ENCODE measurements at regions of chr13 and their contacts with region 1.

Region 1: DNA sequence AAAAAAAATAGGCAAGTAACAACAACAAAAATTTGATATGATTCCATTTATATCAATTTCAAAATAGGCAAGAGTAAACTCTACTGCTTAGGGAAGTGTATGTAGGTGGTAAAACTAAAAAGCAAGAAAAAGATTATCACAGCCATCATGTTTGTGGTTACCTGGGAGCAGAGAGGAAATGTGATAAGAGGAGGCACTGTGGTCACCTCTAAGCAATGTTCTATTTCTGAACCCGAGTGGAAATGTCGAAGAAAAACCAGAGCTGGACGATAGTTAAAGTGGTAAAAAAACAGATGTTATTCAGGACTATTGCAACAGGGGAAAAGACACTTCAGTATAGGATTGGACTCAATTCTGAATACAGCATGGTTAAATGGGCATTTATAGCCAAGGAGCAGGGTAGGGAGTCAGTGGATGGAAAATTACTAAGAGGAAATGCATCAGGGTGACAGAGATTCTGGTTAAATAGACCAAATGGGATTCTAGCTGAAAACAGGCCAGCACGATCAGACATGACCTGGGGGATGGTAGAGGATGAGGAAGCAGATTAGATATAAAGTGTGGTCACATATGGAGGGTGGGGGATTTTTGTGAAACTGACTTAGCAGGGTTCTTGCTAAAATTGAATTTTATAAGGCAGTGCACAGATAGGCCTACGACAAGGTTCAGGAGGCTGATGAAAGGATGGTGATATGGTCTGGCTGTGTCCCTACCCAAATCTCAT is 6.0 kb upstream of the TEX30 start:
- DNase-seq: peak; percentile 47
- H3K4me3 Mint-ChIP-seq: peak overlapping the region; percentile 14
- H3K27ac Mint-ChIP-seq: peak overlapping the region; percentile 90
- H3K4me1 Mint-ChIP-seq: peaks cover 28% of the 10 kb centered on the region
- H3K27me3 Mint-ChIP-seq: no peaks in the 10 kb centered on the region

Region 2: DNA sequence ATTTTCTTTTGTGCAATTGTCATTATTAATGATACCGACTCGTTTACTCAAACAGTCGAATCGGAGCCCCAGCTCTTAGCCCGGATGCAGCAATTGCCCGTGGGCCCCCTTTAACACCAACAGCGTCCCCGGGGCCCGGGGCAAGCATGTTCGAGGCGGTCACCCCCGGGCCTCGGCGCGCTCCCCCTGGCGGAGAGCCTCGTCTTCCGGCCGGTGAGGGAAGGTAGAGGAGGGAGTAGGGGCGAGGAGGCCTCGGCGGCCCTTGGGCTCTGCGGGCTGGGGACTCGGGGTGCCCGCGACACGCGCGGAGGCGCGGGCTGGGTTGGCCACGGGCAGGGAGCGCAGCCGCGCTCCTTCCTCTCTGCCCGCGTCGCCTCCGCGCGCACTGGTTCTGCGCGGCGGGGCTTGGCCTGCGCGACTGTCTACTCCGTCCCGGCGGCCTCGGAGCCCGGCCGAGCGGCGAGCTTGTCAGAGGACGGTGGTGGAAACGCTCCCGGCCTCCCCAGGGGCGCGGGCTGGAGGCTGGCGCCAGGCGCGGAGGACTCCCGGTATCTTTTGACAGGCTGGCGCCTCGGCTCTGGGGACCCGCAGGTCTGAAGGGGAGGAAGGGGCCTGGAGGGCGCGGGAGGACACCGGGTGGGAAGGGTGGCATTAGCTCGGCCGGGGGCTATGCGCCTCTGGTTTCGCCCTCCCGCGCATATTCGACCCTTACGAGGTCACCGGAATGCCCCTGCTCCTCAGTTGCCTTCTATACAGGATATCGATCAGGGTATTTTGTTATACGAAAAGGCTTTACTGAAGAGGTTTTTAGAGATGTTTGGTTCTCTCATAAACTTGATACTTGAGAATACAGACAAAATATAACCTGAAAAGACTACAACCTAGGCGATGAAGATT is 20.8 kb after region 1 on chr13:
- CTCF ChIA-PET with region 1: interaction called, 20 read pairs
- POLR2A ChIA-PET with region 1: interaction called, 3 read pairs
- intact Hi-C with region 1: loop called (anchors 1 kb)
- DNase-seq: peak; percentile 88
- H3K4me3 Mint-ChIP-seq: peak overlapping the region; percentile 90
- H3K27ac Mint-ChIP-seq: peak overlapping the region; percentile 38
- H3K4me1 Mint-ChIP-seq: peaks cover 22% of the 10 kb centered on the region
- H3K27me3 Mint-ChIP-seq: peaks cover 5% of the 10 kb centered on the region

Region 3: DNA sequence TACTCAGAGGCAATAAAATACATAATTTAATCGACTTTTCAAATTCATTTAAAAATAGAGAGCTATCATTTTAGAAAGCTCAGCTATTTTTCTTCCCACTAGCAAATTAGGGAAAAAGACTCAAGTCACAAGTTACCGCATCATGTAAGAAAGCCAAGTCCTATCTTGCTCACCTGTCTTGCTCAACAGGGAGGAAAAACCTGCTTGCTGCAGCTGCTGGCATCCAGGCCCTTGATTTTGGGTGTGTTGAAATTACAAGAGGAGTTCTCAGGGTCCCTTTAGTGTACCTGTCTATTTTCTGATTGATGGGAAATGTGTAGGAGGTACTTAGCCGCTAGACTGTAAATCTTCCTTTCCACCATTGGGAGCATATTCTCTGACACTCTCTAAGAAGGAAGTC is 264.5 kb after region 1 on chr13:
- CTCF ChIA-PET with region 1: no interaction called
- POLR2A ChIA-PET with region 1: no interaction called
- intact Hi-C with region 1: no loop called
- DNase-seq: no peak
- H3K4me3 Mint-ChIP-seq: no peak overlapping the region
- H3K27ac Mint-ChIP-seq: no peak overlapping the region
- H3K4me1 Mint-ChIP-seq: no peaks in the 10 kb centered on the region
- H3K27me3 Mint-ChIP-seq: peaks cover 1% of the 10 kb centered on the region